AG04449 (cell line): ENCODE measurements at regions of chr18 and their contacts with region 1.

Region 1: GRCh38 chr18:63505566-63506335 is 29.0 kb downstream of the SERPINB5 start:
- DNase-seq: no peak
- H3K4me3 ChIP-seq: no peak overlapping the region
- CTCF ChIP-seq: peak; percentile 37

Region 2: GRCh38 chr18:63477972-63478371 is 27.8 kb before region 1 on chr18:
- CTCF ChIA-PET with region 1: interaction called, 13 read pairs
- POLR2A ChIA-PET with region 1: no interaction called
- DNase-seq: no peak
- H3K4me3 ChIP-seq: no peak overlapping the region
- CTCF ChIP-seq: no peak

Region 3: GRCh38 chr18:63487676-63488075 is 18.1 kb before region 1 on chr18:
- CTCF ChIA-PET with region 1: interaction called, 35 read pairs
- POLR2A ChIA-PET with region 1: no interaction called
- DNase-seq: no peak
- H3K4me3 ChIP-seq: no peak overlapping the region
- CTCF ChIP-seq: no peak

Region 4: DNA sequence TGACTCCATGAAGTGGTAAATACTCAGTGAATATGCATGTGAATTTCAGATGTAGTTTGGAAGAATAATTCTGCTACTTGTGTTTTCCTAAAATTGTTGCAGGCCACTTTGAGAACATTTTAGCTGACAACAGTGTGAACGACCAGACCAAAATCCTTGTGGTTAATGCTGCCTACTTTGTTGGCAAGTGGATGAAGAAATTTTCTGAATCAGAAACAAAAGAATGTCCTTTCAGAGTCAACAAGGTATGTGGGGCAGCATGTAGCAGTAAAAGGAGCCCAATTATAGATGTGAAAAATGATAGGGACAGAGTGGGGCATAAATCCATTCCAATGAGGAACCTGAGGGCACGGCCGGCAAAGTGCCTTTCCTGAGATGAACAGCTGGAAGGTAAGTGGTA is 12.9 kb before region 1 on chr18:
- CTCF ChIA-PET with region 1: interaction called, 246 read pairs
- POLR2A ChIA-PET with region 1: no interaction called
- DNase-seq: no peak
- H3K4me3 ChIP-seq: no peak overlapping the region
- CTCF ChIP-seq: no peak

Region 5: GRCh38 chr18:63570716-63571115 is 65.0 kb after region 1 on chr18:
- CTCF ChIA-PET with region 1: interaction called, 724 read pairs
- POLR2A ChIA-PET with region 1: no interaction called
- DNase-seq: no peak
- H3K4me3 ChIP-seq: no peak overlapping the region
- CTCF ChIP-seq: no peak

Region 6: DNA sequence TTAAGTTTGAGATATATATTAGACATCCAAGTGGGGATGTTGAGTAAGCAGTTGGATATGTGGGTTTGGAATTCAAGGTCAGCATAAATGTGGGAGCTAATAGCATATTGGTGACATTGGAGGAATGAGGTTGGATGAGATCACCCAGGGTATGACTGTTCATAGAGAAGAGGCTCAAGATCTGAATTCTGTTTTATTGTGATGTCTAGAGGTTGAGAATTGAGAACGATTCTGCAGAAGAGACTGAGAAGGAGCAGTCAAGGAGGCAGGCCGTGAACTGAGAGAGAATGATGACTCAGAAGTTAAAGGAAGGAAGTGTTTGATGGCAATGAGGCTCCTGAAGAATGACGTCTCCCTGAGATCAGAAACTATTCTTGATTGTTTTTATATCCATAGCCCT is 202.9 kb after region 1 on chr18:
- CTCF ChIA-PET with region 1: no interaction called
- POLR2A ChIA-PET with region 1: no interaction called
- DNase-seq: peak; percentile 77
- H3K4me3 ChIP-seq: no peak overlapping the region
- CTCF ChIP-seq: no peak